Dorsolateral prefrontal cortex (tissue), 120 donors: ENCODE measurements at regions of chr3 and their contacts with region 1.

Region 1: DNA sequence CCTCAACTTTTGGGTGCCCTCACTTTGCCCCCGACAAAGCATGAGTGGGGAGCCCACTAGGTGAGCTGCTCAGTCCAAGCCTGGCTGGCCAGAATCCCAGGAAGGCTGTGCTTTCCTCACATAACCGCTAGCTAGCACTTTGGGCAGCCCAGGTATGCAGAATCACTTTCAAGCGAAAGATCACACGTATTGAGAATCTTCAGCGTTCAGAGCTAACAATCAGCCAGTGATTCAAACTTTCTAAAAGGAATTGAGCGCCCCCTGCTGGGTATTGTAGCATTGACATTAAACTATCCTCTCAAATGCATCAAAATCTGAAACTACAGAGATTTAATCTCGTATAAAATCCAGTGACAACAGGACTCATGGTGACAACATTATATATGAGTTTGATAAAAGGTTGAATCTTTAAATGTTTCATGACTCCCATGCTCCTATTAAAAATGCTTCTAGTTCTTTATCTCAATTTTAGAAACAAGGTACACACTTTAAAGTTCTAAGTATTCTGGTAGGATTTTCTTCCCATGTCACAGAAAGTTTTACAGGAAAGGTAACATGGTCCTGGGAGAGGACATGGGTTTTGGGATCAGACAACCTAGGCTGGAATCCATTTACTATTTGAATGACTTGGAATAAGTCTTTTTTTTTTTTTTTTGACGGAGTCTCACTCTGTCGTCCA is 11.8 kb downstream of the ANAPC13 start:
- DNase-seq: peak in 6 of 10 donors; percentile 49 to 90 (median 76)
- H3K4me3 ChIP-seq: peak overlapping the region in 3 of 59 donors; percentile 6 to 35 (median 8)
- H3K27ac ChIP-seq: peak overlapping the region in 3 of 59 donors; percentile 1 to 16 (median 13)
- H3K27me3 ChIP-seq: no peaks in the 10 kb centered on the region
- CTCF ChIP-seq: peak; percentile 78 to 98 (median 90)

Region 2: DNA sequence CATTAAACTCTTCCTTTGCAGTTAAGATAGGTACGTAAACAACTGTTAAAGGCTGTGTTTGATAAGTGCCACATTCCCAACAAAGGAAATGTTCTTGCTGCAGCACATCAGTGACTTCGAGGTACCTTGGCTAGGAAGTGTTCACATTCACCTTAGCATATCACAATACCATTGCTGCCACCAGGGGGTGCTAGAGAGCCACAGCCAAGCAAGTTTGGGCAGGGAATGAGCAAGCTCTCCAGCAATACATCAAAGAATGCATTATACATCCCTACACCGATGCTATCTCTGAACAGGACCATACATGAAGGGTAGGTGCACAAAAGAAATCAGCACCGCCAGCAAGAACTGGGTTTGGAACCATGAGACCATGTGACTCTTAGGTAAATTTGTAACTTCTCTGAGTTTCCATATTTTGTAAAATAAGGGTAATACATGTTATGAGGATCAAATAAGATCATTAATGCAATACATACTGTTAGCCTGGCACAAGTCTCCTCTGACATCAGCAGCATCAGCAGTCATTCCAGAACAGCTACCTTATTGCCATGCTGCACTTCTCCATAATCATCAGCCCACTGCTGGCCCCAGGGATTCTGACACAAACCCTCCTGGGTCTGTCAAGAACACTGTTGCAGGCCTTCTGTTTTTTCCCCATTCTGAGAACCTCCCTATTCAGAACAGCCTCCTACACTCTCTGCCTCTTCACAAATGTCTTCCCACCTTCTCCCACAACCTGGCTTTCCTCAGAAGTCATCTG is 260.9 kb before region 1 on chr3:
- intact Hi-C with region 1: loop called (anchors 2 to 5 kb)
- DNase-seq: peak; percentile 72 to 93 (median 85)
- H3K4me3 ChIP-seq: no peak overlapping the region
- H3K27ac ChIP-seq: peak overlapping the region in 9 of 59 donors; percentile 7 to 48 (median 17)
- H3K27me3 ChIP-seq: no peaks in the 10 kb centered on the region
- CTCF ChIP-seq: peak; percentile 86 to 100 (median 97)

Region 3: DNA sequence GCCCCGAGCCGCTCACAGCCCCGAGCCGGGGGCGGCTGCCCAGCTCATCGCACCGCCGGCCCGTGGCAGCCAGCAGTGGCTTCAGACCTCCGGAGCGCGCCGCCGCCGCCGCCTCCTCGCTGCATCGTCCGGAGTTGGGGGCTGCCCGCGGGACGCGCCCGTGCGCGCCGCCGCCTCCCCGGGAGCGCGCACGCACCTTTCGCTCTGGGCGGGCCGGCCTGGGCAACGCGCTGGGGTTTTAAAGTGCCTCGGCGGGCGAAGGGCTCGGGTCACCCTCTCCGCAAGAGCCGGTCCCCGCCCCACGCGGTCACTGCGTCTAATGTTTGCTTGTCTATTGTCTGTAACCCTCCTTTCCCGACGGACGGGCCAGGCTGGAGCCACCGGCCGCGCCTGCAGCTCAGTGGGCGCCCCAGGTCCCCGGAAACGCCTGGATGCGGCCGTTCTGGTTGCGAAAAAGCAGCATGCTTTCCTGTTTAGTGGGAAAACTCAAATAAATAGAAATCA is 223.2 kb before region 1 on chr3 and contains the start of gene RYK:
- intact Hi-C with region 1: loop called in 1 of 2 experiments (anchors 5 kb)
- DNase-seq: peak; percentile 62 to 87 (median 73)
- H3K4me3 ChIP-seq: peak within 1 kb of the TSS; percentile 44 to 97 (median 85)
- H3K27ac ChIP-seq: peak within 1 kb of the TSS; percentile 62 to 98 (median 90)
- H3K27me3 ChIP-seq: no peaks in the 10 kb centered on the region
- CTCF ChIP-seq: peak in 10 of 56 donors; percentile 13 to 39 (median 18)
- total RNA-seq, gene RYK: 28.9 to 62.9 (median 42.7) TPM

Region 4: DNA sequence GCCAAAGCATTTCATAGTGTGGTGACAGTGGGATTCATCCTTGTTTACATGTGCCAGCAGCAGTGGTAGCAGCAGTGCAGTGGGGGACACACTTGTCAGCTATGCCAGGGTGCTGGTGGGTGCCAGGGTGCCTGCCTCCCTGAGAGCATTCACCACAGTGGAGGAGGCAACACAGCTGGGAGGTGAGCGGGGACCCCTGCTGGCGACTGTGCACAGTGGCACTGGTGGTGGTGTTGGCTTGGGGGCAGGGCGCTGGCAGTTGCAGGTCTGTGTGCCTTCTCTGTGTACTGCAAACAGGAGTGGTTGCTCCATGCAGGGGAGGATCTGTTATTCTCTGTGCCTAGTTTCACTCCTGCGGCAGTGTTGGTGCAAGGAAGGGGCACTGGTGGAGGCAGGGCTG is 53.0 kb after region 1 on chr3:
- intact Hi-C with region 1: no loop called
- DNase-seq: no peak
- H3K4me3 ChIP-seq: no peak overlapping the region
- H3K27ac ChIP-seq: no peak overlapping the region
- H3K27me3 ChIP-seq: no peaks in the 10 kb centered on the region
- CTCF ChIP-seq: no peak

Region 5: GRCh38 chr3:134761213-134761612 is 287.2 kb after region 1 on chr3:
- intact Hi-C with region 1: no loop called
- DNase-seq: peak in 1 of 10 donors; percentile 43
- H3K4me3 ChIP-seq: no peak overlapping the region
- H3K27ac ChIP-seq: no peak overlapping the region
- H3K27me3 ChIP-seq: no peaks in the 10 kb centered on the region
- CTCF ChIP-seq: no peak